CD4-positive, alpha-beta T cell (primary cell): ENCODE measurements at regions of chr20 and their contacts with region 1.

Region 1: DNA sequence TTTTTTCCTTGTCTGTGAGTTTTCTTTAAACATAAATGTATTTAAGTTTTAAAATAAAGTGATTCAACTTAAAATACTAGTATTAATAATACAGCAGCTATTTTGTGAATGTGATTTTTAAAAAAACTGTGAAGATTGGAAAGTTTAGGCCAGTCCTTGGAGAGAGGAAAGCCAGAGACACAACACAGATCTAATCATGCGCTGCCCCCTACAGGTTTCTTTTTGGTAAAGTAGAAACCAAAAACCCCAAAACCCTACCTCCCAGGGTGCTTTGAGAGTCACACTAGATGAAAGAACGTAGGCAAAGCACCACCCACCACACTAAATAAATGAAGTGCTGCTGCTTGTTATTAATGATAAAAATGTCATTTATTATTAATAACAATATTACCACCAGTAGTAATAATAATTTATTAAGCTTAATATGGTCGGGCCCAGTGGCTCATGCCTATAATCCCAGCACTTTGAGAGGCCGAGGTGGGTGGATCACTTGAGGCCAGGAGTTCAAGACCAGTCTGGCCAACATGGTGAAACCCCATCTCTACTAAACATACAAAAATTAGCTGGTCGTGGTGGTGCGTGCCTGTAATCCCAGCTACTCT is 33.7 kb downstream of the SLC9A8 start:
- DNase-seq: peak in 13 of 14 experiments; percentile 10 to 79 (median 34)
- ATAC-seq: peak; percentile 77
- H3K4me3 ChIP-seq: no peak overlapping the region
- H3K4me3 Mint-ChIP-seq: no peak overlapping the region
- H3K27ac ChIP-seq: no peak overlapping the region
- H3K27ac Mint-ChIP-seq: no peak overlapping the region
- H3K4me1 ChIP-seq: peaks cover 3% of the 10 kb centered on the region
- H3K4me1 Mint-ChIP-seq: peaks cover 9% of the 10 kb centered on the region
- H3K27me3 ChIP-seq: no peaks in the 10 kb centered on the region
- H3K27me3 Mint-ChIP-seq: no peaks in the 10 kb centered on the region
- CTCF ChIP-seq: peak; percentile 70

Region 2: DNA sequence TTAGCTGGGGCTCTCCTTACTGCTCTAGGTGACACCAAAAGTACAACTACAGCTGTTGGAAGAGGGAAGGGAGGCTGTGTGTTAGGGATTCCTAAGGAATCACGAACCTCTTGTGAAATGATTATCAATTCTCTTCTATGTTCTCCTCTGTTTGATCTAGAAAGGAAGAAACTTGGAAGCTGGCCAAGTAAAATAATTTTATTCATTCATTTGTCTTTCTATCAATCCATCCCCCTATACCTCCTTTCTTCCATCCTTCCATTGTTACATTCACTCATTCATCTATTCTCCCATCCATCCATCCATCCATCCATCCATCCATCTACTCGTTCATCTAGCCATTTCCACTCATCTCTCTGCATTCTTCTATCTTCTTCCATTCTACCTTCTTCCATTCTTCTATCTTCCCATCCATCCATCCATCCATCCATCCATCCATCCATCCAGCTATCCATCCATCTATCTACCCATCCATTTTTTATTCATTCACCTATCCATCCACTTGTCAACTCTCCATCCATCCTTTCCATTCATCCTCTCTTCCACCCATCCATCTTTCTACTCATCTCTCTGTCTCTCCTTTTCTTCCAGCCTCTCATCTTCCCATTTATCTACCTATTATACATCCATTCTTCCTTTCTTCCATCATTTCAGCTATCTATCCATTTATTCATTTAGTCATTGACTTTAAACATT is 515.6 kb before region 1 on chr20:
- CTCF ChIA-PET with region 1: no interaction called
- POLR2A ChIA-PET with region 1: no interaction called
- intact Hi-C with region 1: loop called in 1 of 2 experiments (anchors 5 kb)
- DNase-seq: no peak
- ATAC-seq: no peak
- H3K4me3 ChIP-seq: no peak overlapping the region
- H3K4me3 Mint-ChIP-seq: no peak overlapping the region
- H3K27ac ChIP-seq: no peak overlapping the region
- H3K27ac Mint-ChIP-seq: no peak overlapping the region
- H3K4me1 ChIP-seq: no peaks in the 10 kb centered on the region
- H3K4me1 Mint-ChIP-seq: no peaks in the 10 kb centered on the region
- H3K27me3 ChIP-seq: peaks cover 0 to 4% of the 10 kb centered on the region in 2 experiments
- H3K27me3 Mint-ChIP-seq: peaks cover 29% of the 10 kb centered on the region
- CTCF ChIP-seq: no peak

Region 3: DNA sequence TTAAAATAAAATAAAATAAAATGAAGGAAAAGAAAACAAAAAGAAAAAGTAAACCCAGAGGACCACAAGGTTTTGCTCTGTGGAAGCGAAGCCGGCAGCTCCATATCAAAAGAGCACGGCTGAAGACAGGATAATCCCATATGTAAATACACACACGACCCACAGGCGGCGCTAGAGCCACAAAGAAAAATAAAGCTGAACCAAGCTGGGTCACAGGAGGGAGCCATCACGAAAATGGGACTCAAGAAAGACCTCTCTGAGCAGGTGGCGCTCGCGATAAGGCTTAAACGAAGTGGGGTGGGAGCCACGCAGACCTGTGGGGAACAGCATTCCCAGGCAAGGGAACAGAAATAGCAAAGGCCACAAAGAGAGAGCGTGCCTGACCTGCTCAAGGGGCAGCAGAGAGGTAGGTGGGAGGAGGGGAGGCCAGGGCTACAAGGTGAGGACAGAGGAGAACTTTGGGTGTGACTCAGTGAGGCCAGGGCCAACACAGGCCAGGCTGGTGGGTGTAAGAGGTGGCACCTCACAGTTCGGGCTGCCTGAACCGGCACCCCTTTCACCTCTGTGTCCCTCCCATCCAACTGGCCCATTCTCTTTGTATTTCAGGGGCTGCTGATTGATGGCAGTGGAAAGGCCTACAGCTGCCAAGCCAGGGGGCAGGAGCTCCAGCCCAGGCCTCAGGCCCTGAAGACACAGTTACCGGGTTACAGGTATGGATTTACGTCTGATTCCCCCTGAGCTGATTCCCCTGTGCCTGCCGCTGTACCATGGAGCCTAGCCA is 304.4 kb before region 1 on chr20:
- CTCF ChIA-PET with region 1: interaction called, 4 read pairs
- POLR2A ChIA-PET with region 1: no interaction called
- intact Hi-C with region 1: loop called in 1 of 2 experiments (anchors 5 kb)
- DNase-seq: peak; percentile 11 to 78 (median 36)
- ATAC-seq: peak; percentile 51
- H3K4me3 ChIP-seq: no peak overlapping the region
- H3K4me3 Mint-ChIP-seq: no peak overlapping the region
- H3K27ac ChIP-seq: no peak overlapping the region
- H3K27ac Mint-ChIP-seq: no peak overlapping the region
- H3K4me1 ChIP-seq: peaks cover 2% of the 10 kb centered on the region
- H3K4me1 Mint-ChIP-seq: no peaks in the 10 kb centered on the region
- H3K27me3 ChIP-seq: peaks cover 0 to 9% of the 10 kb centered on the region in 2 experiments
- H3K27me3 Mint-ChIP-seq: peaks cover 14% of the 10 kb centered on the region
- CTCF ChIP-seq: peak; percentile 38